GM13977 (cell line): ENCODE measurements at regions of chr17 and their contacts with region 1.

Region 1: GRCh38 chr17:32877164-32877764 is 340 bp upstream of the MYO1D start:
- DNase-seq: peak; percentile 96
- CTCF ChIP-seq: peak; percentile 94

Region 2: DNA sequence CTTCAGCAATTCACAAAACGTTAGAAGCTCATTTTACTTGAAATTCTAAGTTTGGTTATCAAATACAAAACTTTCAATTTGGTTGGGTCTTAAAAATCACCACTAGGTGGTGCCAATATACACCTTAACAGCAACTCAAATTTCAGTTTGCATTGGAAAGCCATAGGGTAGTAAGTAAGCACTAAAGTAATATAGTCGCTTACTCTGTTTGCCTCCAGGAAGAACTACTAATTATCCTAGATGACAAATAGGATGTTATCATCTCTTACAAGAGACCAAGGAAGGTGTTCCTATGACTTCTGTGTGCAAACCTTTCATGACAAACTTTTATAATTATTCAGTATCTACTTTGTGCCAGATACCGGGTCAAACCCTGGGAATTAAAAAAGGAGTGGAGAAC is 93.7 kb before region 1 on chr17:
- in situ Hi-C with region 1: loop called (anchors 5 kb)
- DNase-seq: peak; percentile 59
- CTCF ChIP-seq: peak; percentile 62

Region 3: DNA sequence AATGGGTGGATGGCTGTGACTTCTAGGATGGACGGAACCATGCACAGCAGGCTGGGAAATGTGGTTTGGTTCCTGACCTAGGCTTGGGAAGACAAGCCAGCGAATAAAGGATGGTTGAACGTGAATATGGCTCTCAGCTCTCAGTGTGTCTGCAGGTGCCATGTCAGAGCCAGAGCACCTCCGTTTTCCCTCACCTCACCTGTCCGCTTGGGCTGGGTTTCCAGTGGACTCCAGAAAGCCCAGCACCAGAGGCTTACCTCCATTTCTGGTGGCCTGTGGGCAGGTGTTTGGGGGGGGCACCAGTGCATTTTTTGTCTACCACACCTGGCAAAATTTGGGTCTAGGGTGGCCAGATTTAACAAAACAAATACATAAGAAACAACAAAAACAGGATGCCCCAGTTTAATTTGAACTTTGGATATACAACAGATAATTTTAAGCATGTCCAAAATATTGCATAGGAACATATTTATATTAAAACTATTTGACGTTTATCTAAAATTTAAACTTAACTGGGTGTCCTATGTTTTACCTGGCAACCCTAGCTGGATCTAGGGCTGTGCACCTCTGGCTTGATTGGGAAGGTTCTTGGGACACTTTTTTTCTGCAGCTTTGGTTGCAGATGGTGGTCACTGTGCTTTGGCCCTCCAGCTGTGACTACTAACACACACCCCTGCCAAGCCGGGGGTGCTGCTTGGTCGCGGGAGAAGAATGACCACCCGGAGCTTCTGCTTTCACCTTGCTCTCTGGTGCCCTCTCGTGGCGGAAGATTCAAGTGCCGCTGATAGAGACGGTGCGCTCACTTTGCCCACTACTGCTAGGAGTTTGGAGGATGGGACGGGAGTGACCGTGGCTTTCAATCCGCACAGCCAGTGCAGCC is 120.7 kb after region 1 on chr17:
- in situ Hi-C with region 1: no loop called
- DNase-seq: peak; percentile 76
- CTCF ChIP-seq: peak; percentile 89

Region 4: GRCh38 chr17:33164169-33164881 is 287.1 kb after region 1 on chr17:
- in situ Hi-C with region 1: no loop called
- DNase-seq: no peak
- CTCF ChIP-seq: no peak